ENCODE measurements at regions of chr14 and their contacts with region 1.

Region 1: DNA sequence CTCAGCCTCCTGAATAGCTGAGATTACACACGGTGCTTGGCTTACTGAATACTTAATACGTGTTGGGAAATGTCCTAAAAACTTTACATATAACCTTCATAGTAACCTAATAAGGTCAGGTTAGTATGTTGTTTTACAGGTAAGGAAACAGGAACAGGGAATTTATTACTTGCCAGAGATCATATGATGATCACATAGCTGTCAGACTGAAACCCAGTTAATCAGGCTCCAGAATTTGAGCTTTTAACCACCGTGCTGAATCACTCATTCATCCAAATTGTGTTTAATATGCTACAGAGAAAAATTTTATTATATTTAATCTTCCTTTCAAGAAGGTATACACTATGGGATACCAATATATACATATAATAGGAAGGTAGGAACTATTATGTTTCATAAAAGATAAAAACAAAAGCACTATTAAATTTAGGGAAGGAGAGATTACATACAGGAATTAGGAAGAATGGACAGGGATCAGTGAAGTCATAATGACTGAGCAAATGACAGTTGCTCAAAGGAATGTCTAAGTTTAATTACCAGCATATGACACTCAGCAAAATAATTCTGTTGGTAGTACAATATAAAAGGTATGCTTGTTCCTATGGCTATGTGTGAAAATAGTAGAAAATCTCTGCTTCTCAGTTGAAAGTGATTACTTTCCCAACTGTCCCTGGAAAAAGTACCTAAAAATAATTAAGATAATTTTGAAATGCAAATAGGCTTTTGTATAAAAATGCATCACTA is 59.3 kb downstream of the HEATR5A start:
- DNase-seq: no peak
- H3K4me3 Mint-ChIP-seq: no peak overlapping the region
- H3K27ac Mint-ChIP-seq: no peak overlapping the region
- H3K4me1 Mint-ChIP-seq: no peaks in the 10 kb centered on the region
- H3K27me3 Mint-ChIP-seq: no peaks in the 10 kb centered on the region

Region 2: DNA sequence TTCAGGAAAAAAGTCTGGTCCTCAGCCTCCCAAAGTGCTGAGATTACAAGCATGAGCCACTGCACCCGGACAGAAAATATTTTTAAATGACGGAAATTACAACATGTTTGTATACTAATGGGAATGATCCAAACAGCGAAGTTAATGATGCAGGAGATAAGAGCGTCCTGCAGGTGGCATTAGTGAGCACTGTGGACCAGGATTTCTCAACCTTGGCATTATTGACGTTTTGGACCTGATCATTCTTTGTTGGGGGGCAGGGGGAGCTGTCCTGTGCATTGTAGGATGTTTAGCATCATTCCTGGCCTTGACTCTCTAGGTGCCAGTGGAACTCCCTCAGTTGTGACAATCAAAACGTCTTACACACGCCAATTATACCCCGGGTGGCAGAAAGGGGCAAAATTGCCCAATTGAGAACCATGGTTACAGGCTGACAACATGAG is 704.9 kb before region 1 on chr14:
- CTCF ChIA-PET with region 1: no interaction called
- POLR2A ChIA-PET with region 1: no interaction called
- intact Hi-C with region 1: loop called (anchors 5 kb)
- DNase-seq: peak; percentile 26
- H3K4me3 Mint-ChIP-seq: no peak overlapping the region
- H3K27ac Mint-ChIP-seq: no peak overlapping the region
- H3K4me1 Mint-ChIP-seq: no peaks in the 10 kb centered on the region
- H3K27me3 Mint-ChIP-seq: no peaks in the 10 kb centered on the region

Region 3: GRCh38 chr14:30980980-30981379 is 380.1 kb before region 1 on chr14:
- CTCF ChIA-PET with region 1: no interaction called
- POLR2A ChIA-PET with region 1: no interaction called
- intact Hi-C with region 1: loop called (anchors 2 kb)
- DNase-seq: no peak
- H3K4me3 Mint-ChIP-seq: no peak overlapping the region
- H3K27ac Mint-ChIP-seq: no peak overlapping the region
- H3K4me1 Mint-ChIP-seq: peaks cover 11% of the 10 kb centered on the region
- H3K27me3 Mint-ChIP-seq: no peaks in the 10 kb centered on the region

Region 4: DNA sequence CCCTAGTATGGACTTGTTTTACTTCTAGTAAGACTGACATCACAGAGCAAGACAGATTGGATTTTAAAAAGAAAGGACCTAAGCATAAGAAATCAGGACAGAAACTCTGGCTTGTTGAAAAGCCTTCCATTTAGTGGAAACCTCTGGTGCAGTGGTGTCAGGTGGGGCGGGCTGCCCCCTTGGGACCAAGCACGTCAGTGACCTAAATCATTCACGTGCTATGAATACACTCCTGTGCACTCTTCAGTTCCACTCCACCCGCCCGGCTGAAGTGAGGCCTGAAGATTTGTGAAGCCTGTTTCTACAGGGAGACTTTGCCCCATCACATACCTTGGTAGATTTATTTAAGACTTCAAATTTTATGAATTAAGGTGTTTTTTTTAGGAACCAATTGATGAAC is 276.7 kb before region 1 on chr14:
- CTCF ChIA-PET with region 1: no interaction called
- POLR2A ChIA-PET with region 1: no interaction called
- intact Hi-C with region 1: loop called (anchors 2 kb)
- DNase-seq: no peak
- H3K4me3 Mint-ChIP-seq: no peak overlapping the region
- H3K27ac Mint-ChIP-seq: no peak overlapping the region
- H3K4me1 Mint-ChIP-seq: no peaks in the 10 kb centered on the region
- H3K27me3 Mint-ChIP-seq: no peaks in the 10 kb centered on the region

Region 5: DNA sequence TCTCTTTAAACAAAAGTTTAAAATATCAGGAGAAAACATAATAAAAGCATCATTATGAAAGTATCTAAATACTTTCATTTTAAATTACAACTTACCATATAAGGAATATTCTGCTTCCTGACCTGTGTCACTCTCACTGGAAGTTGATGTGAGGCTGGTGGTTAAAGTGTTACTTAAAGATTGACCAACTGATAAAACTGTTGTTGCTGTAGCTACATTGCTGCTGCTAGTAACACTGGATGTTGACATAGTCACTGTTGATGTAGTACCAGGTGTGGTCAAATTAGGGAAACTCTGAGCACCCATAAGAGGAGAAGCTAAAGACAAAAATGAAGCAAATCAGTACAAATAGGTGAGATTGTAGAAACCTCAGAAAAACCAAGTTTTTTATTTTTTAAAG is 233.4 kb before region 1 on chr14:
- CTCF ChIA-PET with region 1: no interaction called
- POLR2A ChIA-PET with region 1: no interaction called
- intact Hi-C with region 1: loop called (anchors 10 kb)
- DNase-seq: peak; percentile 14
- H3K4me3 Mint-ChIP-seq: no peak overlapping the region
- H3K27ac Mint-ChIP-seq: peak overlapping the region; percentile 55
- H3K4me1 Mint-ChIP-seq: peaks cover 33% of the 10 kb centered on the region
- H3K27me3 Mint-ChIP-seq: no peaks in the 10 kb centered on the region

Region 6: DNA sequence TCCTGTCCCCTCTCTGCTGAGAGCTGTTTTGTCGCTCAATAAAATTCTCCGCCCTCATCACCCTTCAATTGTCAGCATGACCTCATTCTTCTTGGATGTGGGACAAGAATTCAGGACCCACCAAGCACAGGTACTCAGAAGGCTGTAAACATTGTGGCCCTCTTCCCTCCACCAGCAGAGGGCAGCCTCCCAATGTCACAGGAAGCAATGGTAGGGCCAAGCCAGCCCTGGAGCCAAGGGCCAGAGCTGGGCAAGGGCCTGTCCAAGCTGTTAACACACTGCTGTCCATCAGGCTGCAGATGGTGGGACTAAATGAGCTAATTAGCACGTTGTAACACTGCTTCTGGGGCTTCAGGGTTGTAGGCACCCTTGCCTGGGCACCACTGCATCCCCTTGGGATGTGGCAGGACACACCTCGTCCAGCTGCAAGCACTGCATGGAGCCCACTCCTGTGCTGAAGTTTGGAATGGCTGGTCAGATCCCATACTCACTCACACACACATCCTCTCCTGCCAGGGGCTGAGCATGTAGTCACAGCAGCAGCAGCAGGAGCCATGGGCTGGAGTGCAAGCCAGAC is 90.8 kb before region 1 on chr14:
- CTCF ChIA-PET with region 1: no interaction called
- POLR2A ChIA-PET with region 1: no interaction called
- intact Hi-C with region 1: loop called (anchors 1 kb)
- DNase-seq: peak; percentile 49
- H3K4me3 Mint-ChIP-seq: no peak overlapping the region
- H3K27ac Mint-ChIP-seq: no peak overlapping the region
- H3K4me1 Mint-ChIP-seq: peaks cover 17% of the 10 kb centered on the region
- H3K27me3 Mint-ChIP-seq: no peaks in the 10 kb centered on the region